PC-3 (cell line): ENCODE measurements at regions of chr1 and their contacts with region 1.

Region 1: DNA sequence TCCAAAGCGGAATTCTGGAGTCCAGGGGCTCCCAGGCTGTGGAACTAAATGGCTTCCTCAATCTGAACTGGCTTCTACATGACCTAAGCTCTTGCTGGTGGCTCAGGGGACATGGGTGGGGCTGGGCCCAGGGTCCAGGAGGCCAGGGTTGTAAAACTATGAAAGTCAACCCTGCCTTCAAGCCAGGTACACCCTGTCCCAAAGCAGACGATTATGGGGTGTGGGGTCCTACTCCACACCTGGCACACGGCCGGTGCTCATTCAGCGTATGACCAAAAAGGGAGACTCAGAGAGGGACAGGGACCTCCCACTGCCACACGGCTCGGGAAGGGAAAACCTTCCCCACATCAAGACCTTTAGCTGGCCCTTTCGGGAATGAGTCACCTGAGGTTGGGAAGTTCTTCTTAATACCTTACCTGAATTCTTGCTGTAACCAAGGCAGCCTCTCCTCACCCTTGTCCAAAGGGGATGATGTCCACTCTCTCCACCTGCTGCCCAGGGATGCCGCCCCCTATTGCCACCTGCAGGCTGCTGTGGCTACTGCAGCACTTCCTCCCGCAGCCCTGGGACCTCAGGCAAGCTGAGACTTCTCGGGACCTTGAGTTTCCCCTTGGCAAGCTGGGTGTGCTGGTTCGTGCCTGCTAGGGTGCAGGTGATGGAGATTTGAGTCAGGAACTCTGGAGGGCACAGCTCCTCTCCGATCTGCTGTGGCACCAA is 32.2 kb downstream of the RUNX3 start:
- DNase-seq: peak; percentile 59
- ATAC-seq: peak; percentile 92
- H3K4me3 ChIP-seq: no peak overlapping the region
- H3K27ac ChIP-seq: no peak overlapping the region
- H3K4me1 ChIP-seq: no peaks in the 10 kb centered on the region
- H3K27me3 ChIP-seq: no peaks in the 10 kb centered on the region
- CTCF ChIP-seq: peak; percentile 83

Region 2: GRCh38 chr1:24438423-24438901 is 459.5 kb before region 1 on chr1:
- CTCF ChIA-PET with region 1: no interaction called
- POLR2A ChIA-PET with region 1: no interaction called
- intact Hi-C with region 1: no loop called
- DNase-seq: no peak
- ATAC-seq: no peak
- H3K4me3 ChIP-seq: no peak overlapping the region
- H3K27ac ChIP-seq: no peak overlapping the region
- H3K4me1 ChIP-seq: peaks cover 12% of the 10 kb centered on the region
- H3K27me3 ChIP-seq: no peaks in the 10 kb centered on the region
- CTCF ChIP-seq: no peak

Region 3: GRCh38 chr1:24688621-24689195 is 209.2 kb before region 1 on chr1:
- CTCF ChIA-PET with region 1: no interaction called
- POLR2A ChIA-PET with region 1: no interaction called
- intact Hi-C with region 1: no loop called
- DNase-seq: peak; percentile 80
- ATAC-seq: peak; percentile 85
- H3K4me3 ChIP-seq: no peak overlapping the region
- H3K27ac ChIP-seq: no peak overlapping the region
- H3K4me1 ChIP-seq: peaks cover 5% of the 10 kb centered on the region
- H3K27me3 ChIP-seq: no peaks in the 10 kb centered on the region
- CTCF ChIP-seq: peak; percentile 92

Region 4: DNA sequence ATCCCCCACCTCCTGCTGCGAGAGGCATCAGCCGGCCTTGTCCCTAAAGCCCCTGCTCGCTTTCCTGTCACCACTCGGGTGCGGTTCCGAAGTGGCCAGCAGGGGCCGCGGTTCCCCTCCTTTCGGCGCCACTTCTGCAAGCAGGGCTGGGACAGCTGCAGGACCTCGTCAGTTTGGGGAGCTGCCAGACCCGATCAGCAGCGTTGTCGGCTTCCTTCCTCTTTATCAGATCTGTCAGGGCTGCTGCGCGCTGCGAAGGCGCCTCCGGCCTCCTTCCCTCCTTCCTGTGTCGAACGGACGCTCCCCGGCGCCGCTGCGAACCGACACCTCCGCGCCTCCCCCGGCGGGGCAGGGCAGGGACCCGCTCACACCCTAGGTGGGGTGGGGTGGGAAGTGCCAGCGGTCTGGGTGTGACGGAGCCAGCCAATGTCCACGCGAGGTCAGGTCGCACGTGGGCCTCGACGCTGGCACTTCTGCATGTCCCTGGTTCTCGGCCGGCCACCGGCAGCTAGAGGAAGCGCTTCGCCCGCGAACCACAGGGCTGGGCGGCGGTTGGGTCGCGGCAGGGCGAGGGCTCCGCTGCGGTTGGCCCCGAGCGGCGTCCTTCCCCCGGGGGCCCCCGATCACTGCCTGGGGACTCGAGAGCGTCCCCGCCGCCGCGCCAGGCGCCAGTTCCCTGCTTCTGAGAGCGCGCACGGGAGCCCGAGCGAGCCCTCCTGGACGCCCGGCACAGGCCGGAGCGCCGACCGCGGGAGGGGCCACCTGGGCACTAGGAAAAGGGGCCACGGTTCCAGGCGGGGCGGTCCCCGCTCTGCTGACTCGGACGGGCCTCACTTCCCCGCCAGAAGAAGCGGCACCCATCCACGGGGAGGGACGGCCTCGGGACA is 49.7 kb before region 1 on chr1:
- CTCF ChIA-PET with region 1: interaction called, 10 read pairs
- POLR2A ChIA-PET with region 1: no interaction called
- intact Hi-C with region 1: loop called (anchors 2 kb)
- DNase-seq: peak; percentile 90
- ATAC-seq: peak; percentile 89
- H3K4me3 ChIP-seq: peak overlapping the region; percentile 76
- H3K27ac ChIP-seq: no peak overlapping the region
- H3K4me1 ChIP-seq: no peaks in the 10 kb centered on the region; the same call in 1 of the 2 replicates
- H3K27me3 ChIP-seq: no peaks in the 10 kb centered on the region
- CTCF ChIP-seq: peak; percentile 90

Region 5: GRCh38 chr1:24930204-24931145 is 32.5 kb after region 1 on chr1 and contains the start of gene RUNX3:
- CTCF ChIA-PET with region 1: no interaction called
- POLR2A ChIA-PET with region 1: no interaction called
- intact Hi-C with region 1: no loop called
- DNase-seq: peak; percentile 51
- ATAC-seq: peak; percentile 16; the same call in 1 of the 2 replicates
- H3K4me3 ChIP-seq: peak within 1 kb of the TSS; percentile 59
- H3K27ac ChIP-seq: no peak within 1 kb of the TSS
- H3K4me1 ChIP-seq: no peaks in the 10 kb centered on the region
- H3K27me3 ChIP-seq: peaks cover 63% of the 10 kb centered on the region
- CTCF ChIP-seq: no peak
- total RNA-seq, gene RUNX3: 2.8 and 3.7 TPM in 2 replicates

Region 6: GRCh38 chr1:24964811-24965570 is 67.1 kb after region 1 on chr1:
- CTCF ChIA-PET with region 1: no interaction called
- POLR2A ChIA-PET with region 1: no interaction called
- intact Hi-C with region 1: no loop called
- DNase-seq: no peak
- ATAC-seq: no peak
- H3K4me3 ChIP-seq: no peak overlapping the region
- H3K27ac ChIP-seq: no peak overlapping the region
- H3K4me1 ChIP-seq: no peaks in the 10 kb centered on the region
- H3K27me3 ChIP-seq: no peaks in the 10 kb centered on the region; the same call in 1 of the 2 replicates
- CTCF ChIP-seq: no peak